WTC11 (cell line): ENCODE measurements at regions of chr12 and their contacts with region 1.

Region 1: DNA sequence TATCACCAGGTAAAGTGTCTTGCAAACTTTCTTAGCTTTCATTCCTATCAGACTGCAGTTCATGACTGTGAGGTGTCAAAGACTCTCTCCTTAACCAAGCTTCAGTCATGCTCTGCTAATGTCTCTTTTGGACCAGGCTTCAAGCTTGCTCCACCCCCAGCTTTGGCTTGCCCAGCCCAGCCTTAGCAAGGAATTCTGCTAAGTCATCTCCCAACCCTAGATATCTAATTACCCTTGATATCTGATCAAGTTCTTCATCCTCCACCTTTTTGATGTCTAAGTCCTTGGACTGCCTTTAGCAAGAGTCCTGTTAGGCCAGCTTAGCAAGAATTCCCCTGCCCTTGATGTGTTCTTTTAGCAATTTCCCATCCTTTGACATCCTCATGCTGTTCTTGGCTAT is 108.9 kb upstream of the FGD4 start:
- DNase-seq: no peak
- ATAC-seq: peak; percentile 47
- H3K4me3 Mint-ChIP-seq: no peak overlapping the region
- H3K27ac Mint-ChIP-seq: peak overlapping the region; percentile 24; the same call in 1 of the 2 replicates
- H3K4me1 Mint-ChIP-seq: peaks cover 15% of the 10 kb centered on the region
- H3K27me3 Mint-ChIP-seq: no peaks in the 10 kb centered on the region
- CTCF ChIP-seq: no peak

Region 2: GRCh38 chr12:32261638-32262037 is 28.8 kb before region 1 on chr12:
- CTCF ChIA-PET with region 1: interaction called, 14 read pairs
- POLR2A ChIA-PET with region 1: no interaction called
- DNase-seq: peak; percentile 48
- ATAC-seq: peak; percentile 87
- H3K4me3 Mint-ChIP-seq: no peak overlapping the region
- H3K27ac Mint-ChIP-seq: 0 out of 2 replicates have a peak overlapping the region, but pooled peaks have one; percentile 32
- H3K4me1 Mint-ChIP-seq: peaks cover 19% of the 10 kb centered on the region
- H3K27me3 Mint-ChIP-seq: no peaks in the 10 kb centered on the region
- CTCF ChIP-seq: 0 out of 2 replicates have a peak, but pooled peaks have one; percentile 31

Region 3: GRCh38 chr12:32437095-32437515 is 146.7 kb after region 1 on chr12:
- CTCF ChIA-PET with region 1: no interaction called
- POLR2A ChIA-PET with region 1: no interaction called
- DNase-seq: no peak
- ATAC-seq: no peak; the same call in 1 of the 2 replicates
- H3K4me3 Mint-ChIP-seq: no peak overlapping the region
- H3K27ac Mint-ChIP-seq: peak overlapping the region; percentile 64; the same call in 1 of the 2 replicates
- H3K4me1 Mint-ChIP-seq: peaks cover 71% of the 10 kb centered on the region
- H3K27me3 Mint-ChIP-seq: no peaks in the 10 kb centered on the region
- CTCF ChIP-seq: no peak